HEK293T (cell line): ENCODE measurements at regions of chr10 and their contacts with region 1.

Region 1: DNA sequence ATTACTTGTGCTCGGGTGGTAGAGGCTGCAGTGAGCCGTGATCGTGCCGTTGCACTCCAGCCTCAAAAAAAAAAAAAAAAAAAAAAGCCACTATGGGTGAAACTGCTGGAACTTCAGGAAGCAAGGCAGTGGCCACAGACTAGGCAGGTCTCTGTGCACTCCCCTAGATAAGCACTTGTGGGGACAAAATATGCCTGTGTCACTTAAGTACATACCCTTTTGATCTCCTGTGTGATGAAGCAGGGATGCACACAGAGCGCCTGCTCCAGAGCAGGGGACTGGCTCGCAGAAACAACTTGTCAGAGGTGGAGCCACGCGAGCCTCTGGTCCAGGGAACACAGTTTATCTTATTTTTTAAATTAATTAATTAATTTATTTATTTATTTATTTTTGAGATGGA is 42.9 kb upstream of the PSAP start:
- DNase-seq: no peak

Region 2: GRCh38 chr10:71835671-71836595 is 58.0 kb before region 1 on chr10:
- CTCF ChIA-PET with region 1: interaction called, 19 read pairs
- POLR2A ChIA-PET with region 1: interaction called, 3 read pairs
- DNase-seq: no peak